Posterior vena cava (tissue), 2 donors: ENCODE measurements at regions of chr15 and their contacts with region 1.

Region 1: DNA sequence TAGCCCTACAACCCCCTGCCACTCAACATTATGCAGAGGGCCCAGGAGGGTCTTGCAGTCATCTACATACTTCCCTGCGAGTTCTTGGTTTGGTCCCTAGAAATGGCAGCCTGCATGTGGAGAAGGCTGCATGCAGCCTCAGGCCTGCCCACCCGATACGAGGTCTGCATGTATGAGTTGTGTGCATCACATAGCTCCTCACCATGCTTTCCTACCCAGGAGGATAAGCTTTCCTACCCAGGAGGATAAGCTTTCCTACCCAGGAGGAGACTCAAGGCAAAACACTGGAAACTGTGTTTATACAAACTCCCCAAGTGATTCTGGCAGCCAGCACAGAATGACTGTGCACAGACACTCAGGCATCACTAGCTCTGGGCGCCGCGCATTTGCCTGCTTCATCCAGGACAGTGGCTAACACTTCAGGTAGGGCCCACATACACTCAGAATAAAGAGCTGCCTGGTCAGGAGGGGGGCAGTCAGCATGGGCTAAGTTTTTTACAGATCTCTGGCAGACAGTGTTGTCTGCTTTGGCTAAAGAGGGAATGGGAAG is 187.7 kb downstream of the THSD4 start:
- DNase-seq: no peak

Region 2: DNA sequence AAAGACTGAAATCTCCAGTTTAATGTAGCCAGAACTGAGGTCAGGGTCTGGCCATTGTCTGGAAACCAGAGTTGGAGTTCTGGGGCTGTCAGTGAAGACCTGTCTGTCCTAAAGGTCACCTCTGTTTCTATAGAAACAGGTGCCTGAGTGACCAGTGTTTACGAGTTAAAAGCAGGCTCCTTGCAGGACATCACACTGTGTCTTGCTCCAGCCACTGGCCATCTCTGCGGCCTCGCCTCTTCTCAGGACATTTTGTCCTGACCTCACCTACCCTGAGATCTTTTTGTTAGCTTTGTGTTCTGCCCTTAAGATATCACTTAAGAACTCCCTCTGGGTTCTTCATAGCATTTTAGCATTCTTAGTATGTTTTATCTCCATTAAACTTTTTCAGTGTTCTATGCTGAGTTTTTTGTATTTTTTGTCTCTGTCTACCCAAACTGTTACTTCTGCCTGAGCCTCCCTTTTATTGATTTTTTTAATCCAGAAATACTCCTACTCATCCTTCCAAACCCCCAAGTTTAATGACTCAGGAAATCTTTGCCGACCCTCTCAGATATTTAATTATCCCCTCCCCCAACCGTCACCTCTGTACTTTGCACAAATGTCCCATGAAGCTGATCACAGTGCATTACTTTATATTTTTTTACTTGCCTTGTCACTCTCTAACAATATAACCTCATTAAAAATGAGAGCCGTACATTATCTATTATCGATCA is 36.0 kb after region 1 on chr15:
- intact Hi-C with region 1: loop called in 1 of 2 experiments (anchors 1 kb)
- DNase-seq: no peak